CD14-positive monocyte (primary cell): ENCODE measurements at regions of chr1 and their contacts with region 1.

Region 1: GRCh38 chr1:84772428-84772943 is 82.2 kb upstream of the SSX2IP start:
- DNase-seq: peak; percentile 55 to 68 (median 67)
- H3K4me3 ChIP-seq: no peak overlapping the region
- H3K4me3 Mint-ChIP-seq: no peak overlapping the region
- H3K27ac ChIP-seq: no peak overlapping the region
- H3K27ac Mint-ChIP-seq: no peak overlapping the region
- H3K4me1 ChIP-seq: no peaks in the 10 kb centered on the region
- H3K4me1 Mint-ChIP-seq: no peaks in the 10 kb centered on the region
- H3K27me3 ChIP-seq: no peaks in the 10 kb centered on the region
- H3K27me3 Mint-ChIP-seq: peaks cover 4 to 5% (median 4%) of the 10 kb centered on the region in 3 donors
- CTCF ChIP-seq: peak; percentile 92

Region 2: DNA sequence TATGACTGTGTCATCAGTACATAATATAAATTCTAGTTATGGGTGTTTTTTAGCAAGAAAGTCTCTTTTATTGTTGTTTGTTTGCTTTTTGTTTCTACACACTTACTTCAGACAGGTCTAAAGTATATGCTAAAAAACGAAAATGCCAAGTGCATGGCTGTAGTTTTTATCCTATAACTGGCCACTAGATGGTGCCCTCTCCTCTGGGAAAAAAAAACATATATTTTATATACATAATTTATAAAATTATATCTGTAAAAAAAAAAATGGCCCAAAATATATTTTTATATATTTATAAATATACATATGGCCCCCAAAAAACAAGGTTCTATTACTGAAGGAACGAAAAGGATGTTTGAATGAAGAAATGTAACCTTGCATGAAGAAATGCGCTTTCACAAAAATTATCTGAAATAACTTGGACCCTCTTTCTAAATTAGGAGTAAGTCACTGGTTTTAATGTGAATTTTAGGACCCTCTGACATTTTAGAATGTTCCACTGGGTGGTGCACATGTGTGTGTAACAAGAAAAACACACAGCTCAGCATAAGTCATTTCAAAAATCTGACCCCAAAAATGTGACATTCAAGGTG is 867.1 kb before region 1 on chr1:
- intact Hi-C with region 1: loop called in 1 of 2 experiments (anchors 10 kb)
- DNase-seq: peak; percentile 3 to 12 (median 8)
- H3K4me3 ChIP-seq: no peak overlapping the region
- H3K4me3 Mint-ChIP-seq: no peak overlapping the region
- H3K27ac ChIP-seq: no peak overlapping the region
- H3K27ac Mint-ChIP-seq: no peak overlapping the region
- H3K4me1 ChIP-seq: no peaks in the 10 kb centered on the region
- H3K4me1 Mint-ChIP-seq: peaks cover 2% of the 10 kb centered on the region
- H3K27me3 ChIP-seq: no peaks in the 10 kb centered on the region
- H3K27me3 Mint-ChIP-seq: peaks cover 0 to 6% (median 4%) of the 10 kb centered on the region in 3 donors
- CTCF ChIP-seq: peak; percentile 88